ENCODE measurements at regions of chr6 and their contacts with region 1.

Region 1: DNA sequence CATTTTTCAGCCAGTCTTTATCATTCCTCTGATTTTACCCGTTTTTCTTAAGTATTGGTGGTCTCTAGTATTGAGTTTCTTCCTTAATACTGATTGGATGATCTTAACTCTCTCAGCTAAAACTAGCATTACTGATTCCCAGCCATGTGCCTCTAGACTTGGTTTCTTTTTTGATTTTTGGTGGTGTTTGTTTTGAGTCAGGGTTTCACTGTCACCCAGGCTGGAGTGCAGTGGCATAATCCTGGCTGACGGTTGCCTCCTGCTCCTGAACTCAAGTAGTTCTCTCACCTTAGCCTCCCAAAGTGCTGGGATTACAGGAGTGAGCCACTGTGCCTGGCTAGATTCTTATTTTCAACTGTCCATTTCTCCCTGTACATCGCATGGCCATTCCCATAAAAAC is 24.9 kb downstream of the DPPA5 start:
- DNase-seq: no peak
- ATAC-seq: no peak
- H3K4me3 Mint-ChIP-seq: no peak overlapping the region
- H3K27ac Mint-ChIP-seq: no peak overlapping the region
- H3K4me1 Mint-ChIP-seq: no peaks in the 10 kb centered on the region
- H3K27me3 Mint-ChIP-seq: peaks cover 3% of the 10 kb centered on the region
- CTCF ChIP-seq: no peak

Region 2: DNA sequence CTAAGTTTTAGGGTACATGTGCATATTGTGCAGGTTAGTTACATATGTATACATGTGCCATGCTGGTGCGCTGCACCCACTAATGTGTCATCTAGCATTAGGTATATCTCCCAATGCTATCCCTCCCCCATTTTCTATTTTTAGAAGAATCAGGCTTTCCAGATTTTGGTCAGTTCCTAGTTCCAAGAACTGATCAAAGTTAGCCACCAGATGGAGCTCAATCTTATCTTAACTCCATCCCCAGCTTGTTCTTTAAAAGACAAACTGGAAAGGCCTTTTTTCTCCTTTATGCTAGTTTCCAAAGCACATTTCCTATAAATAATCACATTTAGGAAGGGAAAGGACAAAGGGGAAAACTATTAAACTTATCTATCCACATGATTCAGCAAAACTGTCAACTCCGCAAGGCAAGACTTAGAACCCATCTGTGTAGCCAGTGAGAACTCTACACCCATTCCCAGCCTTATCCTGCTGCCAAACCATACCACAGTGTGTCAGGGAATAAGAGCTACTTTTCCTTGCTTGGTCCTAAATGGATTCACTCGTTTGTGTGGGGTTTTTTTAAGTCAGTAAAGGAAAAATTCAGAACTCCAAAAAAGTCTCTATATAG is 43.4 kb before region 1 on chr6:
- CTCF ChIA-PET with region 1: interaction called, 12 read pairs
- POLR2A ChIA-PET with region 1: no interaction called
- intact Hi-C with region 1: no loop called
- DNase-seq: no peak
- ATAC-seq: no peak
- H3K4me3 Mint-ChIP-seq: no peak overlapping the region
- H3K27ac Mint-ChIP-seq: no peak overlapping the region
- H3K4me1 Mint-ChIP-seq: no peaks in the 10 kb centered on the region
- H3K27me3 Mint-ChIP-seq: no peaks in the 10 kb centered on the region
- CTCF ChIP-seq: peak; percentile 15

Region 3: GRCh38 chr6:73388800-73389512 is 59.8 kb after region 1 on chr6:
- CTCF ChIA-PET with region 1: interaction called, 11 read pairs
- POLR2A ChIA-PET with region 1: no interaction called
- intact Hi-C with region 1: no loop called
- DNase-seq: peak; percentile 76
- ATAC-seq: peak; percentile 90
- H3K4me3 Mint-ChIP-seq: peak overlapping the region; percentile 75
- H3K27ac Mint-ChIP-seq: peak overlapping the region; percentile 57
- H3K4me1 Mint-ChIP-seq: peaks cover 14% of the 10 kb centered on the region
- H3K27me3 Mint-ChIP-seq: peaks cover 5% of the 10 kb centered on the region
- CTCF ChIP-seq: peak; percentile 51